PC-3 (cell line): ENCODE measurements at regions of chr18 and their contacts with region 1.

Region 1: DNA sequence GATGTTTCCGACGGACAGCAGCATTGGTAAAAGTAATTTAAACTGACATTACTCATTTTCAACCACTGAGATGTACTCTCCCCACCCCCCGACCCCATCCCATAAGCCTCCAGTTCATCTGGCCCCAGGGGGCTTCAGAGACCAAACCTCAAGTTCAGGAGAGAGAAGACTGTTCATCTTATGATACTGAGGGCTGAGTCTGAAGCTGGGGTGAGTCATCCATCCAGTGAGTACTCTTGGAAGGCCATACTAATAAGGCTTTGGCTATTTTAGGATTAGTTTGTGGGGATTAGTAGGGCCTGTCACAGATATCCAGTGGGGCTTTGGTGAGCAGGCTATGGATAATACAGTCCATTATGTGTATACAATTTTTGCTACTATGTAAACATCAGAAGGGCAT is 125.3 kb upstream of the APCDD1 start:
- DNase-seq: no peak
- ATAC-seq: no peak
- H3K4me3 ChIP-seq: no peak overlapping the region
- H3K27ac ChIP-seq: no peak overlapping the region
- H3K4me1 ChIP-seq: no peaks in the 10 kb centered on the region
- H3K27me3 ChIP-seq: peaks cover 75% of the 10 kb centered on the region
- CTCF ChIP-seq: no peak

Region 2: GRCh38 chr18:10113121-10114022 is 215.7 kb before region 1 on chr18:
- CTCF ChIA-PET with region 1: no interaction called
- POLR2A ChIA-PET with region 1: interaction called, 18 read pairs
- intact Hi-C with region 1: no loop called
- DNase-seq: no peak
- ATAC-seq: no peak
- H3K4me3 ChIP-seq: no peak overlapping the region
- H3K27ac ChIP-seq: no peak overlapping the region
- H3K4me1 ChIP-seq: no peaks in the 10 kb centered on the region
- H3K27me3 ChIP-seq: peaks cover 54% of the 10 kb centered on the region
- CTCF ChIP-seq: no peak